ENCODE measurements at regions of chr17 and their contacts with region 1.

Region 1: GRCh38 chr17:44899069-44899782 is at the start of gene EFTUD2:
- DNase-seq: peak; percentile 95
- ATAC-seq: peak; percentile 94
- H3K4me3 Mint-ChIP-seq: peak within 1 kb of the TSS; percentile 98
- H3K27ac Mint-ChIP-seq: peak within 1 kb of the TSS; percentile 98
- H3K4me1 Mint-ChIP-seq: peaks cover 26% of the 10 kb centered on the region
- H3K27me3 Mint-ChIP-seq: no peaks in the 10 kb centered on the region
- total RNA-seq, gene EFTUD2: 175 to 203 TPM

Region 2: GRCh38 chr17:44258811-44259351 is 640.3 kb before region 1 on chr17:
- CTCF ChIA-PET with region 1: no interaction called
- POLR2A ChIA-PET with region 1: no interaction called
- intact Hi-C with region 1: no loop called
- DNase-seq: no peak
- ATAC-seq: no peak
- H3K4me3 Mint-ChIP-seq: no peak overlapping the region
- H3K27ac Mint-ChIP-seq: no peak overlapping the region
- H3K4me1 Mint-ChIP-seq: no peaks in the 10 kb centered on the region
- H3K27me3 Mint-ChIP-seq: peaks cover 2% of the 10 kb centered on the region

Region 3: DNA sequence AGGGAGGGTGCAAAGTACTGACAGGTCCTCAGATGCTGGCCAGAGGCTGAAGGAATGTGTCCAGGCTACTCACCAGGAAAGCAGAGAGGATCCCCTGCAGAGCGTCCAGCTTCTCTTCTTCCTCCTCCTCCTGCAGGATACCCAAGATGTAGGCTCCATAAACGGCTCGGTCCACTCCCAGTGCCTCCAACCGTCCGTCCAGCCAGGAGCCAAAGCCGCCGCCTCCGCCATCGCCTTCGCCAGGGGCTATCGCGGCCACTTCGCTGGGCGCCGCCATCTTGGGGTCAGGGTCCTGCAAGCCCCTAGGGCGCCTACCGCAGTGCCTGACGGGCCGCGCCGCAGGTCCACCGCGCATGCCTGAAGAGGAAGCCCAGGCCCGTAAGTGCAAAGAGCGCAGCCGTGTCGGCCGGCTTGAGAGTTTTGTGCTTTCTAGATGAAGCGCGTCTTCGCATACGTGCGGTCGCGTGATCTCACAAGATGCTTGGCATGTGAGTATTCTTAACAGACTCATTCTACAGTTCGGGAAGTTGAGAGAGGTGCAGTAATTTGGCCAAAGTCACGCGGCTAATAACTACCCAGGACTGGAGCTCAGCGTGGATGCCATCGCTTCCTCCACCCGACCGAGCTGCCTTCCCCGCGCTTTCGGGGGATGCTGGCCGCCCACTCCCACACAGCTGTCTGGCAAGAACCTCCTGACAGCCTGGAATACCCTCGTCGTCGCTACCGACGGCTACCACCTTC is 209.6 kb before region 1 on chr17 and contains the start of gene CCDC43:
- CTCF ChIA-PET with region 1: no interaction called
- POLR2A ChIA-PET with region 1: no interaction called
- intact Hi-C with region 1: loop called in 1 of 2 experiments (anchors 1 kb)
- DNase-seq: peak; percentile 95
- ATAC-seq: peak; percentile 99
- H3K4me3 Mint-ChIP-seq: peak within 1 kb of the TSS; percentile 86
- H3K27ac Mint-ChIP-seq: peak within 1 kb of the TSS; percentile 93
- H3K4me1 Mint-ChIP-seq: peaks cover 26% of the 10 kb centered on the region
- H3K27me3 Mint-ChIP-seq: no peaks in the 10 kb centered on the region
- total RNA-seq, gene CCDC43: 31.8 to 33.7 TPM

Region 4: DNA sequence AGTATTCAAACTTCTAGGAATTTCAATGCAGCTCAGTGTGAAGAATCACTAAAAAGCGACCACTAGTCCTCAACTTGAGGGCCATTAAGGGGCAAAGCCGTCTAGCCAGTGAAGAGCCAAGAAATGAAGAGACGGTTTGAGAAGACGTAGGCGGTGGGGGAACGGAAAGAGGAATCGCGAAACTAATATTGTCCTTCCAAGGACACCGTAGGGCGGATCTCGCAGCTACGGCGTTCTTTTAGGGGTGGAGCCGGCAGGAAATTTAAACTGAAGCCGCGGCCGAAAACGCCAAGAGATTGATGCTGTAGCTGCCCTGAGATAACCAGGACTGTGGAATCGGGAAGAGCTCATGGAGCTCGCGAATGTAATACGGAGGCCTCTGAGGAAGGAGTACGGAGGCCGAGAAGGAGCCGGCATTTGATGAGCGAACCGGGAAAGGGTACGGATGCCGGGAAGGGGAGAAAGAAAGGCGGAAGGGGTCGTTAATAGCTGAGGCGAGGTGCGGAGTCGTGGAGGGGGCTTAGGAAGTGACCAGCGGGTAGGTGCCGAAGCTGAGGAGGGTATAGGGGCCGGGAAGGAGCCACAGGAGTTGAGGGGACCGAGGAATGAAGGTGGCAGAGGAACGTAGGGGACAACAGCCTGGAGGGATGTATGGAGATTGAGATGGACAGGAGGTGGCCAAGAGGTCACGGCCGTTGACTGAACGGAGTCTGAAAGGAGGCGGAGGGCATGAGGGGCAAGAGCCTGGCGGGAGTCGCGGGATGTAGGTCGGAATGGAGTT is 190.6 kb before region 1 on chr17 and contains the start of gene DBF4B:
- CTCF ChIA-PET with region 1: no interaction called
- POLR2A ChIA-PET with region 1: no interaction called
- intact Hi-C with region 1: loop called in 1 of 2 experiments (anchors 1 kb)
- DNase-seq: peak; percentile 89
- ATAC-seq: peak; percentile 85
- H3K4me3 Mint-ChIP-seq: no peak within 1 kb of the TSS
- H3K27ac Mint-ChIP-seq: no peak within 1 kb of the TSS
- H3K4me1 Mint-ChIP-seq: peaks cover 5% of the 10 kb centered on the region
- H3K27me3 Mint-ChIP-seq: peaks cover 5% of the 10 kb centered on the region
- total RNA-seq, gene DBF4B: 23.5 to 26.4 TPM

Region 5: GRCh38 chr17:44947461-44948314 is 48.5 kb after region 1 on chr17 and contains the start of gene KIF18B:
- CTCF ChIA-PET with region 1: interaction called, 3 read pairs
- POLR2A ChIA-PET with region 1: no interaction called
- intact Hi-C with region 1: loop called in 1 of 2 experiments (anchors 1 kb)
- DNase-seq: peak; percentile 96
- ATAC-seq: peak; percentile 98
- H3K4me3 Mint-ChIP-seq: peak within 1 kb of the TSS; percentile 90
- H3K27ac Mint-ChIP-seq: peak within 1 kb of the TSS; percentile 88
- H3K4me1 Mint-ChIP-seq: peaks cover 4% of the 10 kb centered on the region
- H3K27me3 Mint-ChIP-seq: no peaks in the 10 kb centered on the region
- total RNA-seq, gene KIF18B: 38.9 to 48.7 TPM

Region 6: DNA sequence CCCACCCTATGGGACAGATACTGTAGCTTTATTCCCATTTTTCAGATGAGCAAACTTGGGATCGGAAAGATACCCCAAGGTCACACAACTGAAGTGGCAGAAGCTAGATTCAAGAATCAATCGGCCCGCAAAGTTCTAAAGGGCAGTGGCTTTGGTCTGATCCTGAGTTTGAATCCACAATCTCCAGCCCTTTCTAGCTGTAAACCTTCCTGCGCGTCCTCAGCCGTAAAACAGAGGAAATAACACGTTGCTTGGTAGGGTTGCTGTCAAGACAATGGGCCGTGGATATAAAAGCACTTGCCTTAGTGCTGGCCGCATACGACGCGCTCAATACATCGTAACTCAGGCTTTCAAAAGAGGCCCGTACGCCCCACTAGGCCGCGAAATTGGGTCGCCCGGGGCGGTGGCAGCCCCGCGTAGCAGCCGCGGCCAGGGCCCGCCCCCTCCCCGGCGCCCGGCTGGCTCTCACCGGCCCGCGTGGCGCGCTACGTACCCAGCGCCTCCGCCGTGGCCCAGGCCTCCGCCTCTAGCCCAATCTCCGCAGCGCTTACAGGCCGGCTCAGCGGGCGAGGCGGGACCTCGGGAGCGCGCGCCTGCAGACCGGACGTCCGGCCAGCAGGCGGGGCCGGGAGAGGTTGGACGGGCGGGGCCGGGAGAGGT is 152.0 kb after region 1 on chr17 and contains the start of gene DCAKD:
- CTCF ChIA-PET with region 1: interaction called, 3 read pairs
- POLR2A ChIA-PET with region 1: interaction called, 3 read pairs
- intact Hi-C with region 1: loop called in 1 of 2 experiments (anchors 1 kb)
- DNase-seq: peak; percentile 96
- ATAC-seq: peak; percentile 97
- H3K4me3 Mint-ChIP-seq: peak within 1 kb of the TSS; percentile 87
- H3K27ac Mint-ChIP-seq: peak within 1 kb of the TSS; percentile 95
- H3K4me1 Mint-ChIP-seq: peaks cover 50% of the 10 kb centered on the region
- H3K27me3 Mint-ChIP-seq: no peaks in the 10 kb centered on the region
- total RNA-seq, gene DCAKD: 34.8 to 36.2 TPM

Measured in activated CD4-positive, alpha-beta T cell treated with anti-CD3 and anti-CD28 coated beads for 36 hours (primary cell).